ENCODE measurements at regions of chr1 and their contacts with region 1.

Region 1: GRCh38 chr1:203216274-203217138 is 13.0 kb downstream of the CHIT1 start:
- DNase-seq: no peak
- H3K4me3 ChIP-seq: no peak overlapping the region
- H3K27me3 ChIP-seq: peaks cover 8% of the 10 kb centered on the region; the same call in 1 of the 2 replicates
- CTCF ChIP-seq: peak; percentile 64

Region 2: DNA sequence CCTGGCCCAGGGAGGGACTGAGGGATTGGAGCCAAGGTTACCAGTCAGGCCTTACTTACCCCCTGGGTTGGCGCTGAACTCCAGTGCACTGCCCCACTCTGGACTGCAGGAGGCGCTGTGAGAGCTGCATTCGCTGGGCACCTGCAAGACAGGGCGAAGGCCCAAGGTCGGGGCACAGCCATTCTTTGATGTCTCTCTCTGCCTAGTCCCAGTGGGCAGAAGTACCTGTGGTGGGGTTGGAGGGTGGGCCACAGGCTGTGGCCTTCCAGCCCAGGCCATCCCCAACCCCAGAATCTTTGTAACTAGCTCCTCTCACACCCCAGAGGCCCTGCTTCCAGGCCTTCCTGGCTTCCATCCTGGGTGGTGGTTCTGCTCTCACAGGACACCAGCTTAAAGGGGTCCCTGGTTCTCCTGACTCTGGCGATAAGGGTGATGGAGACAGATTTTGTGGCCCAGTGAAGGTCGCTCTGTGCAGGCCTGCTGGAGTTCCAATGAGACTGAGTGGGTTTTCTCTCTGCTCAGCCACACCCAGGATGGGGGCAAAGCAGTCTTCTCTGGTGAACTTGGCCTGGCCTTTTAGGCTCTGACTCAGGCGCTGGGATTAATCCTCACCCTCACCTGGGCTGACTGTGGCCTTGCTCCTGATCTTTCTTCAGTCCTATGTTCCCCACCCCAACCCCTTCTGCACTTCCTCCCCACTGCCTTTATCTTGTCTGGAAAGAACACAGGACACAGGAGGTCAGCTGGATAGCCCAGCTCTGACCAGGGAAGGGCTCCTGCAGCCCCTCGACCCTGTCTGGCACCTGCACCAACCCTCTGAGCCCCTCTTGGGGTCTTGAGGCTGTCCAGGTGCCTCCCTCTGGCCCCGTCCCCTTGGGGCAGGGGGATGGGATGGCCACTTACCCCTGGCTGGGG is 131.7 kb before region 1 on chr1:
- CTCF ChIA-PET with region 1: interaction called, 12 read pairs
- POLR2A ChIA-PET with region 1: no interaction called
- DNase-seq: no peak
- H3K4me3 ChIP-seq: no peak overlapping the region
- H3K27me3 ChIP-seq: peaks cover 21% of the 10 kb centered on the region
- CTCF ChIP-seq: peak; percentile 39; the same call in 1 of the 2 replicates

Region 3: GRCh38 chr1:203127666-203128430 is 88.7 kb before region 1 on chr1 and contains the start of gene ADORA1:
- CTCF ChIA-PET with region 1: interaction called, 282 read pairs
- POLR2A ChIA-PET with region 1: no interaction called
- DNase-seq: no peak
- H3K4me3 ChIP-seq: peak within 1 kb of the TSS; percentile 41
- H3K27me3 ChIP-seq: peaks cover 8% of the 10 kb centered on the region
- CTCF ChIP-seq: peak; percentile 32
- polyA plus RNA-seq, gene ADORA1: 2.1 and 2.4 TPM in 2 replicates

Region 4: GRCh38 chr1:203166566-203166940 is 50.0 kb before region 1 on chr1:
- CTCF ChIA-PET with region 1: interaction called, 146 read pairs
- POLR2A ChIA-PET with region 1: no interaction called
- DNase-seq: no peak
- H3K4me3 ChIP-seq: no peak overlapping the region
- H3K27me3 ChIP-seq: no peaks in the 10 kb centered on the region; the same call in 1 of the 2 replicates
- CTCF ChIP-seq: no peak

Region 5: GRCh38 chr1:203202431-203203245 is 13.9 kb before region 1 on chr1:
- CTCF ChIA-PET with region 1: interaction called, 58 read pairs
- POLR2A ChIA-PET with region 1: no interaction called
- DNase-seq: peak; percentile 69
- H3K4me3 ChIP-seq: no peak overlapping the region
- H3K27me3 ChIP-seq: no peaks in the 10 kb centered on the region
- CTCF ChIP-seq: no peak

Region 6: DNA sequence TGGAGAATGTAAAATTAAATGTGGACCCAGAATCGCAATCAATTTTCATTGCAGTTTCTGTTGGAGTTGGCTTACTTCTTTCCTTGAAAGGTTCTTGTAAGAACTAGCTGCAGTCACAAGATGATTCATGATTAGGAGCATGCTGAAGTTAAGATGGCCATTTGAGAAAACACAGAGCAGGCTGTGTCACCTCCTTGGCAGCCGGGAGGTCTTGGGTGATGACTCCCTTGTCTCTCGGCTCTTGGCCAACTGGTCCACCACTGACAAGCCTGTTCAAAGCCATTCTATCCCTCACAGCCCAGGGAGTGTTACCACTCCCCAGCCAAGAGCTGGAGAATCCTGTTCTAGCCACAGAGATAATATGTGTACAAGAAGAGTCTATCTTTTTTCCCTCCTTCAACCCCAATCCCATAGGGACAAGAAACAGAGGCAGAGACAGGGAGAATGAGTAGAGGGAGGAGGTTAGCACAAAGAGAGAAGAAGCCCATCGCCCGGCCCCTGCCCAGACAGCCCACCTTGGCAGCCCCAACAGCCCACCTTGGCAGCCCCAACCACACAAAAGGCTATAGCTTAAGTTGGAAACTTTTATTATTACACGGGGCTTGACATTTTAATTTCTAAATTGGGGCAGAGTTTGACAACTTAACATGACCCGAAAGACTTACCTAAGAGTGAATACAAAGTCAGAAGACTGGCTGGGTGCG is 318.2 kb after region 1 on chr1:
- CTCF ChIA-PET with region 1: no interaction called
- POLR2A ChIA-PET with region 1: no interaction called
- DNase-seq: peak; percentile 85
- H3K4me3 ChIP-seq: no peak overlapping the region
- H3K27me3 ChIP-seq: no peaks in the 10 kb centered on the region
- CTCF ChIP-seq: no peak